Activated CD8-positive, alpha-beta T cell treated with anti-CD3 and anti-CD28 coated beads, Interleukin-2, amount 10 ng/mL, durations not matched to agents 7 days and 5 days (primary cell): ENCODE measurements at regions of chr20 and their contacts with region 1.

Region 1: DNA sequence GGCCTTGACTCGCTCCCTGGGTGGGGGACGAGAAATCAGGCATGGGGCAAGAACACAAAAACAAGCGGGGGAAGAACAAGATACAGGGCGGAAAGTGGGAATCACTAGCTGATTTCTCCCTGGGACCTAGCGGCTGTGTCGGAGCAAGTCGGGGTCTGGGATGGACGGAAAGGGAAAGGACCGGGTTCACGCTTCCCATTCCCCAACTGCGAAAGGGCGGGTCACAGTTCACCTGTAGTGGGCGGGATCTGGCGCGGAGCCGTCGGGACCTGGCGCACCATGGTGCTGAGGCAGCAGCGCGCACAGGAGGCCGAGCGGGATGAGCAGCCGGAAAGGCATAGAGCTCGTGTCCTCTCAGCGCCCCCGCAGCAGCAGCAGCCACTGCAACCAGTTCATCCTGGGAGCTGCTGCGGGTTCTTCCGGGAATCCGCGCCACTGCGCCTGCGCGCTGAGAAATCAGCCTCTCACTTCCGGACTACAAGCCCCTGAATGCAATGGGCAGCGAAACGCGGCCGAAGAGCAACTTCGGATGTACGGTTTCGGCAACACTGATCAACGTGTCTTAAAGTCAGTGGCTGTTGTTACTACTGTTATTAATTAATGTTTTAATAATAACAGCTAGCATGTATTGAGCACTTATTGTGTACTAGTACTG is at the start of gene EDEM2:
- DNase-seq: peak; percentile 96
- ATAC-seq: peak; percentile 91
- H3K4me3 Mint-ChIP-seq: peak within 1 kb of the TSS; percentile 99
- H3K27ac Mint-ChIP-seq: peak within 1 kb of the TSS; percentile 79
- H3K4me1 Mint-ChIP-seq: peaks cover 29% of the 10 kb centered on the region
- H3K27me3 Mint-ChIP-seq: no peaks in the 10 kb centered on the region
- total RNA-seq, gene EDEM2: 19.5 to 19.6 TPM

Region 2: DNA sequence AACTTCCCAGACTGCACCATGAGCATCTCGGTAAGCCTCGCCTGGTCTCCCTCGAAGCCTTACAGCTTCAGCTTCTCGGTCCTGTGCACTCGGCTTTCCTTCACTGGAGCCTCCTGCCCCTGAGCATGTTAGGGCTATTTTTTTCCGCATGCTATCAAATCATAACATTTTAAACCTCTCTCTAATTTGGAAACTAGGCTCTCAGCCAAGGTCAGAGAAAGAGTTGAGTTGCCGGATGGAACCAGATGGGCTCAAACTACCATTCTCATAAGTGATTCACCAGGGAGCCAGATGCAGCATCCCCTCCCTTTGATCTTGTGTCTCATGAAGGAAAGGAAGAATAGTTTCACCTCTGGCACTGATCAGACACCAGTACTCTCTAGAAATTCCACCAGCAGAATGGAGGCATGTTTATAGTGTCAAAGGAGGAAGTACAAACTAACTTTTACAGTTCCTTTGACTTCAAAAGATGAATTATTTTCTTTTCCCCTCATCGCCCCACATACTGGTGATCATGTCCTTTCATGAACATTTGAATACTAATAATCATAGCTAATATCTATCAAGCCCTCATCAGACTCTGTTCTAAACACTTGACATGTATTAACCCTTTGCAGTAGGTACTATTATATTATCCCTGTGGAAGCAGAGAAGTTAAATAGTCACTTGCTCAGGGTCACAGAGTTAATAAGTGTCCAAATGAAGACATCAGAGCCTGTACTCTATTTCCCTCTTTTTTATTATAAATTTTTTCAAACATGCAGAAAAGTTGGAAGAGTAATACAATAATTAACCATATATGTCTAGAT is 541.9 kb before region 1 on chr20:
- CTCF ChIA-PET with region 1: no interaction called
- POLR2A ChIA-PET with region 1: no interaction called
- DNase-seq: no peak
- ATAC-seq: no peak
- H3K4me3 Mint-ChIP-seq: no peak overlapping the region
- H3K27ac Mint-ChIP-seq: no peak overlapping the region
- H3K4me1 Mint-ChIP-seq: peaks cover 10% of the 10 kb centered on the region
- H3K27me3 Mint-ChIP-seq: no peaks in the 10 kb centered on the region

Region 3: GRCh38 chr20:35092524-35093266 is 54.4 kb before region 1 on chr20 and contains the start of gene TRPC4AP:
- CTCF ChIA-PET with region 1: interaction called, 52 read pairs
- POLR2A ChIA-PET with region 1: interaction called, 4 read pairs
- DNase-seq: peak; percentile 91
- ATAC-seq: peak; percentile 96
- H3K4me3 Mint-ChIP-seq: peak within 1 kb of the TSS; percentile 79
- H3K27ac Mint-ChIP-seq: peak within 1 kb of the TSS; percentile 91
- H3K4me1 Mint-ChIP-seq: peaks cover 46% of the 10 kb centered on the region
- H3K27me3 Mint-ChIP-seq: no peaks in the 10 kb centered on the region
- total RNA-seq, gene TRPC4AP: 43.2 to 44.6 TPM

Region 4: DNA sequence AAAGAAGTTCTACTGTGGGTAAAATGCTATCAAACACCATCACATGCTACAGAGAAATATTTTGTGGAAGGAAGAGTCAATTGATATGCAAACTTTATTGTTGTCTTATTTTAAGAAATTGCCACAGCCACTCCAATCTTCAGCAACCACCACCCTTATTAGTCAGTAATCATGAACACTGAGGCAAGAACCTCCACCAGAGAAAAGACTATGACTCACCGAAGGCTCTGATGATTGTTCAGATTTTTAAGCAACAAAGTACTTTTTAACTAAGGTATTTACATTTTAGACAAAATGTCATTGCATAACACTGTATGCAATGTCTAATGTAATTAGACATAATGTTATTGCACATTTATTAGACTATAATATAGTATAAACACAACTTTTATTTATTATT is 53.2 kb after region 1 on chr20:
- CTCF ChIA-PET with region 1: interaction called, 11 read pairs
- POLR2A ChIA-PET with region 1: no interaction called
- DNase-seq: no peak
- ATAC-seq: no peak
- H3K4me3 Mint-ChIP-seq: no peak overlapping the region
- H3K27ac Mint-ChIP-seq: no peak overlapping the region
- H3K4me1 Mint-ChIP-seq: no peaks in the 10 kb centered on the region
- H3K27me3 Mint-ChIP-seq: no peaks in the 10 kb centered on the region

Region 5: GRCh38 chr20:35269055-35269781 is 122.2 kb after region 1 on chr20:
- CTCF ChIA-PET with region 1: interaction called, 73 read pairs
- POLR2A ChIA-PET with region 1: interaction called, 3 read pairs
- DNase-seq: peak; percentile 67
- ATAC-seq: peak; percentile 72
- H3K4me3 Mint-ChIP-seq: no peak overlapping the region
- H3K27ac Mint-ChIP-seq: no peak overlapping the region
- H3K4me1 Mint-ChIP-seq: peaks cover 10% of the 10 kb centered on the region
- H3K27me3 Mint-ChIP-seq: no peaks in the 10 kb centered on the region

Region 6: GRCh38 chr20:35303735-35304491 is 156.9 kb after region 1 on chr20:
- CTCF ChIA-PET with region 1: interaction called, 15 read pairs
- POLR2A ChIA-PET with region 1: no interaction called
- DNase-seq: peak; percentile 92
- ATAC-seq: peak; percentile 79
- H3K4me3 Mint-ChIP-seq: no peak overlapping the region
- H3K27ac Mint-ChIP-seq: peak overlapping the region; percentile 60
- H3K4me1 Mint-ChIP-seq: peaks cover 44% of the 10 kb centered on the region
- H3K27me3 Mint-ChIP-seq: no peaks in the 10 kb centered on the region